Activated CD4-positive, alpha-beta memory T cell treated with anti-CD3 and anti-CD28 coated beads for 36 hours (primary cell): ENCODE measurements at regions of chr20 and their contacts with region 1.

Region 1: DNA sequence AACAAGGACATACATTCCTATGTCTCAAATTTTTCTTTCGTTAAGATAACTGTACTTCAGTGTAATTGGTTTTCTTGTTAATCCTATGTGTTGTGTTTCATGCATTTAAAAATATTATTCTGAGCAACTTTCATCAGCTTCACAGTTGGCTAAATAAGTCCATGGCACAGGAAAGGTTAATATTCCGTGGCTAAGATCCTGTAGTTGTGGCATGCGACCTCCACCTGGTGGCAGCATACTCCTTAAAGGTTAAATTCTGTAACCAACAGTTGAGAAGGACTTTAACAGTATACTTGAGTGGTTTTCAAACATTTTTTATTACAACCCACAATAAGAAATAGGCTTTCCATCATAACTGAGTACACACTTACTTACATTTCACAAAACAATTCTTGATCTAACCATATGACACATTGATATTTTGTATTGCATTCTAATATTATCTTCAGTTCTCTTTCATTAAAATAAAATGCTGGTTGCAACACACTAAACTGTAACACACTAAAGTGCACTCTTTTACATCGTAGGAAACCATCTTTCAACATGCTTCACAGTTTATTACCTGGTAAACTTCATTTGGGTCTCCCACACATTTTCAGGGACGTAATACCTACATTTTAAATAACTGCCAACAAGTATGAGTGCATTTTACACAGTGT is 118.3 kb downstream of the SLX4IP start:
- DNase-seq: peak; percentile 65
- H3K4me3 Mint-ChIP-seq: no peak overlapping the region
- H3K27ac Mint-ChIP-seq: no peak overlapping the region
- H3K4me1 Mint-ChIP-seq: peaks cover 30% of the 10 kb centered on the region
- H3K27me3 Mint-ChIP-seq: no peaks in the 10 kb centered on the region

Region 2: GRCh38 chr20:11204926-11205768 is 651.7 kb after region 1 on chr20:
- CTCF ChIA-PET with region 1: interaction called, 3 read pairs
- POLR2A ChIA-PET with region 1: no interaction called
- intact Hi-C with region 1: loop called (anchors 2 kb)
- DNase-seq: peak; percentile 22
- H3K4me3 Mint-ChIP-seq: no peak overlapping the region
- H3K27ac Mint-ChIP-seq: no peak overlapping the region
- H3K4me1 Mint-ChIP-seq: no peaks in the 10 kb centered on the region
- H3K27me3 Mint-ChIP-seq: no peaks in the 10 kb centered on the region

Region 3: GRCh38 chr20:11274141-11274594 is 720.7 kb after region 1 on chr20:
- CTCF ChIA-PET with region 1: no interaction called
- POLR2A ChIA-PET with region 1: no interaction called
- intact Hi-C with region 1: loop called (anchors 10 kb)
- DNase-seq: no peak
- H3K4me3 Mint-ChIP-seq: no peak overlapping the region
- H3K27ac Mint-ChIP-seq: no peak overlapping the region
- H3K4me1 Mint-ChIP-seq: no peaks in the 10 kb centered on the region
- H3K27me3 Mint-ChIP-seq: no peaks in the 10 kb centered on the region

Region 4: GRCh38 chr20:11544029-11544678 is 990.7 kb after region 1 on chr20:
- CTCF ChIA-PET with region 1: interaction called, 3 read pairs
- POLR2A ChIA-PET with region 1: no interaction called
- intact Hi-C with region 1: loop called (anchors 5 kb)
- DNase-seq: no peak
- H3K4me3 Mint-ChIP-seq: no peak overlapping the region
- H3K27ac Mint-ChIP-seq: no peak overlapping the region
- H3K4me1 Mint-ChIP-seq: no peaks in the 10 kb centered on the region
- H3K27me3 Mint-ChIP-seq: no peaks in the 10 kb centered on the region